GM12878 (cell line): ENCODE measurements at regions of chr3 and their contacts with region 1.

Region 1: GRCh38 chr3:152071924-152072323 is 196.8 kb upstream of the MBNL1 start:
- DNase-seq: no peak
- ATAC-seq: peak; percentile 96
- H3K4me3 ChIP-seq: no peak overlapping the region
- H3K27ac ChIP-seq: no peak overlapping the region
- H3K4me1 ChIP-seq: no peaks in the 10 kb centered on the region
- H3K27me3 ChIP-seq: no peaks in the 10 kb centered on the region
- CTCF ChIP-seq: peak; percentile 47 to 64 (median 60)
- EP300 ChIP-seq: no peak
- POLR2A ChIP-seq: no peak
- RAD21 ChIP-seq: peak; percentile 53

Region 2: DNA sequence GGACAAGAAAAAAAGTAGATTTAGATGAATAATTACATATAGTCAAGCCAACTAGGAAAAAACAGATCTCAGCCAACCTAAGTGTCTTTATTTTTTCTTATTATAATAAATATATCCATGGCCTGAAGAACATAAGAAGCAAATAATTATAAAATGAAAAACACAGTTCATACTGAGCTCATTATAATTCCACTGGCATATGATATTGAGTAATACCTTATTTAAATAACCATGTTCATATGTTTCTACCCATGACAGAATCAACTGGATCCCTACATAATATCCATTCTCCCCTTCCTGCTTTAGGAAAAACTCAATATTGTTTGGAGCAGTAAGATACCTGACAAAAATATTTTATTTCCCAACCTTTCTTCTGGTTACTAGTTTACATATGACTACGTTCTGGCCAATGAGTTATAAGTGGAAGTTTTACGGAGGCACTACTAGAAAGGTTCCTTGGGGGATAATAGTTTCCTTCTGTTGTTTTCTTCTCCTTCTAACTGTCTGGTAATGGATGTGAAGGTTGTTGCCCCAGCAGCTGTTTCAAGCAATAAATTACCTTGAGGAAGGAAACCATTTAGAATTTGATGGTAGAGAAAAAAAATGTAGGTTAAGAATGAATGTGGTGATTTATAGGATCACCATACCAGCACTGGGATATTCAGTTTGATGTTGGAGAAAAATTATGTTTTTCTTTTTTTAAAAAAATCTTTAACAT is 12.7 kb after region 1 on chr3:
- CTCF ChIA-PET with region 1: interaction called, 11 read pairs
- POLR2A ChIA-PET with region 1: no interaction called
- RAD21 ChIA-PET with region 1: interaction called, 4 read pairs
- SMC1A ChIA-PET with region 1: interaction called, 7 read pairs
- in situ Hi-C with region 1: no loop called
- intact Hi-C with region 1: no loop called
- DNase-seq: no peak
- ATAC-seq: no peak
- H3K4me3 ChIP-seq: no peak overlapping the region
- H3K27ac ChIP-seq: no peak overlapping the region
- H3K4me1 ChIP-seq: no peaks in the 10 kb centered on the region
- H3K27me3 ChIP-seq: no peaks in the 10 kb centered on the region
- CTCF ChIP-seq: no peak
- EP300 ChIP-seq: no peak
- POLR2A ChIP-seq: no peak
- RAD21 ChIP-seq: no peak

Region 3: DNA sequence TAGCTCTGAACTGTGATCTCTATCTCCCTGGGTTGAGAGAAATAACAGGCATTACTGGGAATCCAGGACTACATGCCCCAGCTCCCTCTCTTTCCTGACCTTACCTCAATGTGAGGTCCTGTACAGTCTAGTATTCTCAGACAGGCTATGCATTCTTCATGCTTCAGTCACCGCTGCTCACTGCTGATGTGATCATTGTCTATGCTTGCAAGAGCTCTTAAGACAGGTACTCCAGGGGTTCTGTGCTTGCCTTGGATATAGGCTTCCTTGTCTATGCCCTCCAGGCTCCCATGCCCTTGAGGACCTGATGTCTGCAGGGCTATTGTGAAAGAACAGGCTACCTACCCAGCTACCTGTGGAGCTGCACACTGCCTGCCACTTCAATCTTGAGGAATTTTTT is 380.4 kb after region 1 on chr3:
- CTCF ChIA-PET with region 1: interaction called, 27 read pairs
- POLR2A ChIA-PET with region 1: no interaction called
- RAD21 ChIA-PET with region 1: interaction called, 86 read pairs
- SMC1A ChIA-PET with region 1: interaction called, 11 read pairs
- in situ Hi-C with region 1: no loop called
- intact Hi-C with region 1: no loop called
- DNase-seq: no peak
- ATAC-seq: peak; percentile 24; the same call in 2 of the 3 replicates
- H3K4me3 ChIP-seq: no peak overlapping the region
- H3K27ac ChIP-seq: no peak overlapping the region
- H3K4me1 ChIP-seq: no peaks in the 10 kb centered on the region
- H3K27me3 ChIP-seq: no peaks in the 10 kb centered on the region
- CTCF ChIP-seq: no peak
- EP300 ChIP-seq: no peak
- POLR2A ChIP-seq: no peak
- RAD21 ChIP-seq: no peak

Region 4: GRCh38 chr3:152466784-152467183 is 394.9 kb after region 1 on chr3:
- CTCF ChIA-PET with region 1: interaction called, 54 read pairs
- POLR2A ChIA-PET with region 1: interaction called, 3 read pairs
- RAD21 ChIA-PET with region 1: interaction called, 25 read pairs
- SMC1A ChIA-PET with region 1: interaction called, 34 read pairs
- in situ Hi-C with region 1: no loop called
- intact Hi-C with region 1: no loop called
- DNase-seq: no peak
- ATAC-seq: peak; percentile 83
- H3K4me3 ChIP-seq: no peak overlapping the region
- H3K27ac ChIP-seq: no peak overlapping the region
- H3K4me1 ChIP-seq: no peaks in the 10 kb centered on the region
- H3K27me3 ChIP-seq: no peaks in the 10 kb centered on the region
- CTCF ChIP-seq: peak; percentile 41 to 47 (median 46); a peak in 4 of 6 replicates
- EP300 ChIP-seq: no peak
- POLR2A ChIP-seq: no peak
- RAD21 ChIP-seq: peak; percentile 42

Region 5: GRCh38 chr3:152574461-152575079 is 502.6 kb after region 1 on chr3:
- CTCF ChIA-PET with region 1: interaction called, 6 read pairs
- POLR2A ChIA-PET with region 1: no interaction called
- RAD21 ChIA-PET with region 1: interaction called, 5 read pairs
- SMC1A ChIA-PET with region 1: interaction called, 4 read pairs
- in situ Hi-C with region 1: no loop called
- intact Hi-C with region 1: loop called (anchors 5 kb)
- DNase-seq: peak; percentile 26
- ATAC-seq: peak; percentile 95
- H3K4me3 ChIP-seq: no peak overlapping the region
- H3K27ac ChIP-seq: no peak overlapping the region
- H3K4me1 ChIP-seq: no peaks in the 10 kb centered on the region; the same call in 1 of the 2 replicates
- H3K27me3 ChIP-seq: no peaks in the 10 kb centered on the region
- CTCF ChIP-seq: peak; percentile 38 to 69 (median 52); a peak in 5 of 6 replicates
- EP300 ChIP-seq: no peak
- POLR2A ChIP-seq: no peak
- RAD21 ChIP-seq: peak; percentile 87